ENCODE measurements at regions of chr2 and their contacts with region 1.

Region 1: GRCh38 chr2:21203976-21204375 is 80.2 kb downstream of the TDRD15 start:
- DNase-seq: no peak
- H3K4me3 ChIP-seq: no peak overlapping the region
- H3K27ac ChIP-seq: no peak overlapping the region
- H3K4me1 ChIP-seq: no peaks in the 10 kb centered on the region
- H3K27me3 ChIP-seq: no peaks in the 10 kb centered on the region
- CTCF ChIP-seq: no peak
- POLR2A ChIP-seq: no peak

Region 2: DNA sequence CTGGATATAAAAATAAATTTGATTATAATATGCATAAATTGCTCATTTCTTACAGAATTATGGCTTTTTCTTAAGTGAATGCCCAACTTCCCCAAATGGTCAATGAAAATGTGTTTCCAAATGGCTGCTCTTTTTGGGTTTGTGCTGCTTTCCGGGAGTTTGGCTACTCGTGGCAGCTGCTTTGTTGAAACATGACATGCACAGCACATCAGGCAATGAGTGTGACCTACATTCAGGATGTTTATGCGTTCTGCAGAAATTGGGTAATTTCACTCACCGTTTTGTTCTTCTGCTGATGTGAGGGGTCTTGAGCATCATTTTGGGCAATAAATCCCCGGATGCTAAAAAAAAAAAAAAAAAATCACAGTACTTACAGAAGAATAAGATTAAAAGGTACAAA is 1356.0 kb after region 1 on chr2:
- intact Hi-C with region 1: loop called (anchors 10 kb)
- DNase-seq: no peak
- H3K4me3 ChIP-seq: no peak overlapping the region
- H3K27ac ChIP-seq: no peak overlapping the region
- H3K4me1 ChIP-seq: no peaks in the 10 kb centered on the region
- H3K27me3 ChIP-seq: no peaks in the 10 kb centered on the region
- CTCF ChIP-seq: no peak
- POLR2A ChIP-seq: no peak

Measured in breast epithelium (tissue), 4 donors.